SK-N-SH (cell line): ENCODE measurements at regions of chr2 and their contacts with region 1.

Region 1: GRCh38 chr2:151161821-151162551 is 99.7 kb downstream of the RBM43 start:
- DNase-seq: no peak
- H3K4me3 ChIP-seq: no peak overlapping the region
- H3K27ac ChIP-seq: peak overlapping the region in 1 of 2 experiments; percentile 73; a peak in 2 of 4 replicates
- H3K4me1 ChIP-seq: peaks cover 0 to 17% of the 10 kb centered on the region in 2 experiments; a peak in 2 of 4 replicates
- H3K27me3 ChIP-seq: no peaks in the 10 kb centered on the region
- CTCF ChIP-seq: peak; percentile 52
- EP300 ChIP-seq: 0 out of 4 replicates have a peak, but pooled peaks of 1 of the 2 experiments have one; percentile 10
- RAD21 ChIP-seq: peak; percentile 79

Region 2: DNA sequence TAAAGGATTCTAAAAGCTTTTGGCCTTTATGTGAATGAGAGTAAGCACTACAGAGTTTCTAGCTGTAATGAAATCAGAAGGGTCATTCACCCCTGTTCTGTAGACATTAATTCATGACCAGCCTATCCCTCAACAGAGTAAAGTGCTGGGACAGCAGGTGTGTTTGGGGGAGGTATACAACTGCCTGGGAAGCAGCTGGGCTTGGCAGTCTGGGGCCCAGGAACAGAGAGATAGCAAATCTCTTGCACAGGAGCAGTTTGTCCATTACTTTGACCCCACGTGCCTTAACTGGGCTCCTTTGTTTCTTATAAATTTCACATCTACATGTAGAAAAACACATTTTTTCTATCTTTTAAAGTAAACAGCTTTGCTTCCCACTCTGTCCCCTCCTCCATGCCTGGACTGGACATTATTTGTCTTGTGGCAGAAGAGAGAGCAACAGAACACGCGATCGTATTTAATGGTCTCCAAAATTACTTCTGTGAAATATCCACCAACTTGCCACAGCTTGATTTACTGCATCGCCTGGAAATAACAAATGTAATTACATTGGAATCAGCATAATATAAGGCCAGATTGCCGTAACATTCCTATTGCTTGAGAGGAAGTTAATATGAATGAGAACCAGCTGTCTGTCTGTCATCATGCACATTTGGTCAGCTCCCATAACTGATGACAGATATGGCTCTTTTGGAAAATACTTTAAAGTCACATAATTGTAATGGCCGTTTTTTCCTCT is 164.1 kb before region 1 on chr2:
- CTCF ChIA-PET with region 1: interaction called, 11 read pairs
- POLR2A ChIA-PET with region 1: no interaction called
- DNase-seq: peak; percentile 65
- H3K4me3 ChIP-seq: no peak overlapping the region
- H3K27ac ChIP-seq: peak overlapping the region; percentile 40 to 100; a peak in 3 of 4 replicates
- H3K4me1 ChIP-seq: peaks cover 0 to 24% of the 10 kb centered on the region in 2 experiments; a peak in 2 of 4 replicates
- H3K27me3 ChIP-seq: no peaks in the 10 kb centered on the region
- CTCF ChIP-seq: no peak
- EP300 ChIP-seq: peak; percentile 68 to 99; a peak in 3 of 4 replicates
- RAD21 ChIP-seq: peak; percentile 36

Region 3: DNA sequence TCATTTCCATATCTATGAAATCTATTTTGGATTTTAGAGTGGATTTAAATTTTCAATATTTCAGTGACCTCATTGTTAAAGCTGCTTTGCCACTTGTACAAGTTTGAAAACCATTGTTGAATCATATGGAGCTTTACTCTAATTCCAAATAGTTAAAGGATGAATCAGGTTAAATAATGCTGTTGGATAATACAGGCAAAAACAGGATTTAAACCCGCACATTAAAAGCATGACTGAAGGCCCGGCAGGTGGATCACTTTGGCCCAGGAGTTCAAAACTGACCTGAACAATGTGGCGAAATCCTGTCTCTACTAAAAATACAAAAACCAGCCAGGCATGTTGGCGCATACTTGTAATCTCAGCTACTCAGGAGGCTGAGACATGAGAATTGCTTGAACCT is 316.0 kb after region 1 on chr2:
- CTCF ChIA-PET with region 1: no interaction called
- POLR2A ChIA-PET with region 1: no interaction called
- DNase-seq: no peak
- H3K4me3 ChIP-seq: no peak overlapping the region
- H3K27ac ChIP-seq: no peak overlapping the region
- H3K4me1 ChIP-seq: 0 out of 4 replicates have a peak, but pooled peaks cover 0 to 7% of the 10 kb centered on the region in 2 experiments
- H3K27me3 ChIP-seq: no peaks in the 10 kb centered on the region
- CTCF ChIP-seq: no peak
- EP300 ChIP-seq: no peak
- RAD21 ChIP-seq: no peak